Endothelial cell of umbilical vein (primary cell): ENCODE measurements at regions of chr3 and their contacts with region 1.

Region 1: DNA sequence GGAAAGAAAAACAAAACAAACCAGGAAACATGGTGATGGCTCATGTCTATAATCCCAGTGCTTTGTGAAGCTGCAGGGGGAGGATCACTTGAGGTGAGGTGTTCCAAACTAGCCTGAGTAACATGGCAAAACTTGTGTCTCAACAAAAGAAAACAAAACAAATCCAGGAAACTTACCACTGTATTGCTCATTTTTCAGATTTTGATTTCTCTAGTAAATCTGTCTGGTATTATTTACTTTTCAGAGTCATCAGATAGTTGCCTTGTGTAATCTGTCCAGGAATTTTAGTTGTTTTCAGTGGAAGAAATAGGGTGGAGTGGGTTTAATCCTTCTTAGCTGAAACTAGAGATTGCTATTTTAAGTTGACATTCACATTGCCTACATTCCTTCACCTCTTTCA is 91.8 kb upstream of the ALCAM start:
- DNase-seq: peak; percentile 55
- H3K4me3 ChIP-seq: no peak overlapping the region
- H3K27ac ChIP-seq: no peak overlapping the region
- H3K4me1 ChIP-seq: peaks cover 12% of the 10 kb centered on the region
- H3K27me3 ChIP-seq: no peaks in the 10 kb centered on the region
- CTCF ChIP-seq: no peak
- POLR2A ChIP-seq: no peak

Region 2: DNA sequence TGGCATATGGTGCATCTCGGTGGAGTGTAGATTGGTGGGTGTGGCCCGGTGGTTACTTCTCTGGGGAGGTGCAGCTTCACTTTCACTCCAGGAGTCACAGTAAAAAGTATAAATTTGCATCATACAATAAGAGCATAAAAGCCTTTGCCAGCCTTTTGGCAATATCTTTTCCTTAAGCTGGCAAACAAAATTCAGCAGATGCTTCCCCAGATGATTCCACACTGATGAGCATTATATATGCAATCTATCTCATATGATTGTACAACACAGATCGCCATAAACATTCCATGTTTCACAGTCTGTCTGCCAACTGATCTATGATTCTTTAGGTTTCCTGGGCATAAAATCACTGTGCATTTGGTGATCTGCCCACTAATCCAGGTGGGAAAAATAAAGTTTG is 28.4 kb before region 1 on chr3:
- CTCF ChIA-PET with region 1: no interaction called
- POLR2A ChIA-PET with region 1: no interaction called
- dilution Hi-C with region 1: no loop called
- intact Hi-C with region 1: loop called (anchors 1 kb)
- DNase-seq: no peak
- H3K4me3 ChIP-seq: no peak overlapping the region
- H3K27ac ChIP-seq: no peak overlapping the region
- H3K4me1 ChIP-seq: no peaks in the 10 kb centered on the region
- H3K27me3 ChIP-seq: no peaks in the 10 kb centered on the region
- CTCF ChIP-seq: no peak
- POLR2A ChIP-seq: no peak

Region 3: DNA sequence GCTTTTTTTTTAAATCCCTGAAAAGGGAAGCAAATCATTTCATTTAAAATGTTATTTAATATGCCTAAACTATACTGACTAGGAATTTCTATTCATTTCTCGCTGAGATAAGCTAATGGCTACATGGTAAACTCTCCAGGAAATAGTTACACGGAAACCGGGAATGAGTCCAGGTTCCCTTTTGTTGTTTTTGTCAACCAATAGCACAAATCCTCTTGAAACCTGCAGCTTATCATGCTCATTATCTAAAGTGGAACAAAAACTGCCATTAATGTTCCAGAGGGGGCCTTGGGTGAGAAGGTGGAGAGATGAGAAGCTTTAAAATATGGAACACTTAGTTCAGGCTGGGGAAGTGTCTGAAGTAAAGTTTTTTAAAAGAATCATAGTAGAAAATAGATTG is 21.7 kb before region 1 on chr3:
- CTCF ChIA-PET with region 1: interaction called, 5 read pairs
- POLR2A ChIA-PET with region 1: no interaction called
- dilution Hi-C with region 1: no loop called
- intact Hi-C with region 1: loop called (anchors 2 kb)
- DNase-seq: peak; percentile 92
- H3K4me3 ChIP-seq: no peak overlapping the region
- H3K27ac ChIP-seq: no peak overlapping the region
- H3K4me1 ChIP-seq: peaks cover 10% of the 10 kb centered on the region
- H3K27me3 ChIP-seq: no peaks in the 10 kb centered on the region
- CTCF ChIP-seq: no peak
- POLR2A ChIP-seq: no peak

Region 4: DNA sequence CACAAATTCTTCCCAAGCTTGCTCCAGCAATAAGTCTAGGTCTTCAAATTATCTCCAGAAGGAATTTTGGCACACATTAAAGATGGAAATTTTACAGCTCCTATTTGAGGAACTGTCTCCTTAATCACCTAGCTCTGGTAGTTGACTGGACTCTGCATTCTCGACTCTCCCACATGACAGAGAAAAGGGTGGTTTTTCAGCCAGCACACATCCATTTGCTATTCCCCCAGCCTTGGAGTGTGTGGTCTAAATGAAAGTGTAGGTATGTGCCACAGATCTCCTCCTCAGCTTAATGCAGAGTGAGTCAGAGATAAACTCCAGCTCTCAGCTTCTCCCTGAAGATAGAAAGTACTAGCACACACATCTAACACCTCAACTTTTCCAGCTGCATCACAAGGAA is 29.5 kb after region 1 on chr3:
- CTCF ChIA-PET with region 1: no interaction called
- POLR2A ChIA-PET with region 1: no interaction called
- dilution Hi-C with region 1: no loop called
- intact Hi-C with region 1: no loop called
- DNase-seq: no peak
- H3K4me3 ChIP-seq: no peak overlapping the region
- H3K27ac ChIP-seq: no peak overlapping the region
- H3K4me1 ChIP-seq: no peaks in the 10 kb centered on the region
- H3K27me3 ChIP-seq: no peaks in the 10 kb centered on the region
- CTCF ChIP-seq: no peak
- POLR2A ChIP-seq: no peak

Region 5: GRCh38 chr3:105353485-105354161 is 78.7 kb after region 1 on chr3:
- CTCF ChIA-PET with region 1: interaction called, 3 read pairs
- POLR2A ChIA-PET with region 1: no interaction called
- dilution Hi-C with region 1: no loop called
- intact Hi-C with region 1: loop called (anchors 5 kb)
- DNase-seq: peak; percentile 35
- H3K4me3 ChIP-seq: peak overlapping the region; percentile 21 to 43 (median 32)
- H3K27ac ChIP-seq: peak overlapping the region; percentile 78
- H3K4me1 ChIP-seq: peaks cover 46% of the 10 kb centered on the region
- H3K27me3 ChIP-seq: no peaks in the 10 kb centered on the region
- CTCF ChIP-seq: no peak
- POLR2A ChIP-seq: no peak

Region 6: GRCh38 chr3:105853801-105854432 is 579.0 kb after region 1 on chr3:
- CTCF ChIA-PET with region 1: no interaction called
- POLR2A ChIA-PET with region 1: no interaction called
- dilution Hi-C with region 1: no loop called
- intact Hi-C with region 1: no loop called
- DNase-seq: no peak
- H3K4me3 ChIP-seq: no peak overlapping the region
- H3K27ac ChIP-seq: no peak overlapping the region
- H3K4me1 ChIP-seq: no peaks in the 10 kb centered on the region
- H3K27me3 ChIP-seq: no peaks in the 10 kb centered on the region
- CTCF ChIP-seq: no peak
- POLR2A ChIP-seq: no peak